Activated CD8-positive, alpha-beta T cell treated with anti-CD3 and anti-CD28 coated beads for 36 hours (primary cell): ENCODE measurements at regions of chr19 and their contacts with region 1.

Region 1: GRCh38 chr19:56350416-56351045 is 35.9 kb upstream of the ZSCAN5A start:
- DNase-seq: peak; percentile 74
- ATAC-seq: peak; percentile 67
- H3K4me3 Mint-ChIP-seq: no peak overlapping the region
- H3K27ac Mint-ChIP-seq: no peak overlapping the region
- H3K4me1 Mint-ChIP-seq: no peaks in the 10 kb centered on the region
- H3K27me3 Mint-ChIP-seq: no peaks in the 10 kb centered on the region
- CTCF ChIP-seq: peak; percentile 92

Region 2: DNA sequence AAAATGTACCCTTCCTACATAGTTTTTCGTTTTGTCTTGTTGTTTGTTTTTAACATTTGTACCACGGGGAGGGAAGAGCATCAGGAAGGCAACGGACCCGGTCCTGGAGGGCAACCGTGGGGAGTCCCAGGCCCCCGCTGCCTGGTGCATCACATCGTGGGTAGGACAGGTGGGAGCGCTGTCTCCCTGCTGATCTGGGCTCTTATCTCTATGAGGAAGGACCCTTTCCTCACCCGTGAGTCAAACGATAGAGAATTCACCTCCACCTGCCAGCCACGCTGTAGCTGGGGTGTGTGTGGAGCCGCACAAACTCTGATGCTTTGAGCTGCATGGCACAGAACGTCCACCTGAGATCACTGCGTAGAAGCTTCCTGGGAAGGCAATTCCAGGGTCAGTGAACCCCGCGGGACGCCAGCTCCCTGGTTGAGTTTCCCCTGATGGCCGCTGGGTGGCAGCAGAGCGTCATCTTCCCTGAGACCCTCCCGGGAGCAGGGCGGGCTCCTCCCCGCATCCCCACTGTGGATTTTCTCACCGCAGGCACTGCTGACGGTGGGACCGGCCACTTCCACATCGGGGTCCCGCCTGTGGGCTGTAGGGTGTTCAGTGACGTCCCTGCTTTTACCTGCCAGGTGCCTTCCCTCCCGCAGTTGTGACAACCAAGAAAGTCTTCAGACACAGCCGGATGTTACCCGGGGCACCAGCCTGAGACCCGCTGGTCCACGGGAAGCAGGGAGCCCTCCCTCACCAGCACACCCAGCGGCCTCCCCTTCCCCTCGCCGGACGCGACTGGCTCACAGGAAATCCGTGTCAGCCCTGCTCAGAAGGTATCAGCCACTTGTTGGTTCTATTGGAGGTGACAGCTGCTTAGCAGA is 284.1 kb before region 1 on chr19:
- CTCF ChIA-PET with region 1: interaction called, 12 read pairs
- POLR2A ChIA-PET with region 1: no interaction called
- intact Hi-C with region 1: no loop called
- DNase-seq: peak; percentile 65
- ATAC-seq: peak; percentile 84
- H3K4me3 Mint-ChIP-seq: peak overlapping the region; percentile 54
- H3K27ac Mint-ChIP-seq: no peak overlapping the region
- H3K4me1 Mint-ChIP-seq: peaks cover 11% of the 10 kb centered on the region
- H3K27me3 Mint-ChIP-seq: peaks cover 25% of the 10 kb centered on the region
- CTCF ChIP-seq: peak; percentile 99

Region 3: GRCh38 chr19:56309517-56310185 is 40.9 kb before region 1 on chr19:
- CTCF ChIA-PET with region 1: interaction called, 12 read pairs
- POLR2A ChIA-PET with region 1: no interaction called
- intact Hi-C with region 1: no loop called
- DNase-seq: peak; percentile 78
- ATAC-seq: peak; percentile 71
- H3K4me3 Mint-ChIP-seq: no peak overlapping the region
- H3K27ac Mint-ChIP-seq: no peak overlapping the region
- H3K4me1 Mint-ChIP-seq: peaks cover 20% of the 10 kb centered on the region
- H3K27me3 Mint-ChIP-seq: no peaks in the 10 kb centered on the region
- CTCF ChIP-seq: peak; percentile 90

Region 4: GRCh38 chr19:56333505-56333904 is 17.0 kb before region 1 on chr19:
- CTCF ChIA-PET with region 1: interaction called, 11 read pairs
- POLR2A ChIA-PET with region 1: no interaction called
- intact Hi-C with region 1: no loop called
- DNase-seq: peak; percentile 61
- ATAC-seq: peak; percentile 62
- H3K4me3 Mint-ChIP-seq: no peak overlapping the region
- H3K27ac Mint-ChIP-seq: no peak overlapping the region
- H3K4me1 Mint-ChIP-seq: no peaks in the 10 kb centered on the region
- H3K27me3 Mint-ChIP-seq: no peaks in the 10 kb centered on the region
- CTCF ChIP-seq: peak; percentile 60

Region 5: GRCh38 chr19:56360841-56361240 is 10.3 kb after region 1 on chr19:
- CTCF ChIA-PET with region 1: interaction called, 16 read pairs
- POLR2A ChIA-PET with region 1: interaction called, 3 read pairs
- intact Hi-C with region 1: no loop called
- DNase-seq: no peak
- ATAC-seq: no peak
- H3K4me3 Mint-ChIP-seq: no peak overlapping the region
- H3K27ac Mint-ChIP-seq: no peak overlapping the region
- H3K4me1 Mint-ChIP-seq: no peaks in the 10 kb centered on the region
- H3K27me3 Mint-ChIP-seq: no peaks in the 10 kb centered on the region
- CTCF ChIP-seq: no peak

Region 6: DNA sequence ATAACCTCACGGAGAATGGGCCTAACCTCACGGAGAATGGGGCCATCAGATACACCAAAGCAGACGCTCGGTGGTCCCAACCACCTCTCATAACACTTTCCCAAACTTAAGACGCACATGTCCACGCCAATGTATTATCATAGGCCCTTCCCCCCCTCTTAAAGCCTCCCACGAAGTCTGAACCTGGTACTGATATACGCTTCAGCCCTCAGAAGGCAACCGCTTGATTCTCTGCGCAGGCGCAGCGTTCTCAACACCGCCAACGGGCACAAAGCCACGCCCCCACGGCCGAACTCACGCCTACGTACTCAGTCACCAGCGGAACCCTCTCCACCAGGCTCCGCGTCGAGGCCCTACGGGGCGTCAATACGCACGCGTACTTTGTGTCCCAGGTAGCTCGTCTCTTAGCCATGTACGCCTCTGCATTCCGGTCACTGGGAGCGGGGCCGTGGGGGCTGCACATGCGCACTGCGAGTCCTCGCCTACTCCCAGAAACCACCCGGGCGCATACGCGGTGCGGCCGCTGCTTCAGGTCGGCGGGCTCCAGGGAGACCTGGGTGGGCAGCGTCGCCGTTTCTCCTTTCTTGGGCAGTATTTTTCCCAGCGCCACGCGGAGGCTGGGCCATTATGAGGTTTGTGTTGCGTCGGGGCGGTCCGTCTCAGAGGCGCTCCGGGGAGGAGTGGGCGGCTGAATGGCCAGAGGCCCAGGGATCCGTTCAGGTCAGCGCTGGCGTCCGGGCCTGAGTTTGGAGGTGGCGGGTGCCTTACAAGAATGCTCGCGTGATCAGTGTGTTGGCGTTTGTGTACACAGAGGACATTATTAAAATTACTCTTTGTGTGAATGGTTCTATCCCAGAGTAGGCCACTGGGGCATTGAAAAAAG is 17.5 kb after region 1 on chr19:
- CTCF ChIA-PET with region 1: interaction called, 10 read pairs
- POLR2A ChIA-PET with region 1: interaction called, 3 read pairs
- intact Hi-C with region 1: no loop called
- DNase-seq: peak; percentile 92
- ATAC-seq: peak; percentile 99
- H3K4me3 Mint-ChIP-seq: peak overlapping the region; percentile 90
- H3K27ac Mint-ChIP-seq: peak overlapping the region; percentile 87
- H3K4me1 Mint-ChIP-seq: peaks cover 21% of the 10 kb centered on the region
- H3K27me3 Mint-ChIP-seq: no peaks in the 10 kb centered on the region
- CTCF ChIP-seq: peak; percentile 22

Region 7: GRCh38 chr19:56477429-56478338 is 127.2 kb after region 1 on chr19:
- CTCF ChIA-PET with region 1: no interaction called
- POLR2A ChIA-PET with region 1: no interaction called
- intact Hi-C with region 1: no loop called
- DNase-seq: peak; percentile 82
- ATAC-seq: peak; percentile 87
- H3K4me3 Mint-ChIP-seq: peak overlapping the region; percentile 79
- H3K27ac Mint-ChIP-seq: peak overlapping the region; percentile 94
- H3K4me1 Mint-ChIP-seq: peaks cover 23% of the 10 kb centered on the region
- H3K27me3 Mint-ChIP-seq: peaks cover 10% of the 10 kb centered on the region
- CTCF ChIP-seq: no peak